Activated naive CD4-positive, alpha-beta T cell treated with anti-CD3 and anti-CD28 coated beads for 36 hours (primary cell): ENCODE measurements at regions of chr3 and their contacts with region 1.

Region 1: GRCh38 chr3:152268555-152269425 is at the start of gene MBNL1:
- DNase-seq: peak; percentile 91
- H3K4me3 Mint-ChIP-seq: peak within 1 kb of the TSS; percentile 81
- H3K27ac Mint-ChIP-seq: peak within 1 kb of the TSS; percentile 91
- H3K4me1 Mint-ChIP-seq: peaks cover 46% of the 10 kb centered on the region
- H3K27me3 Mint-ChIP-seq: no peaks in the 10 kb centered on the region
- total RNA-seq, gene MBNL1: 387 to 391 TPM

Region 2: DNA sequence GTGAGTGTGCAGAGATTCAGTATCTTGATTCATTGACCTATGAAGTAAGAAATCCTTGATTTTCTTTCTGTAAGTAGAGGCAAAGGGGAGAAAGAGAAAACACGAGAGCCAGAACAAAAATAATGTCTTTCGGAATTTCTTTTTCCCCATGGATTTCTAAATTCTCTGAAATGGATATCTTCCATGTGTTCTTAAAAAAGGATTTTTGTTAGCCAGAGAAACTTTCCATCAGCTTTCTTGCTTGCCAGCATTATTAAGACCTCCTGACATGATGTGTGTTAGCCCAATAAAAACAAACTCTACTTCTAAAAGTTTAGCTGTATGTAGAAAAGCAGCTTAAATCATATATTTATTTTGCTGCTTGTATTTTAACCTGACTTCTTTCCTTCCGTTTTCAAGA is 657.4 kb before region 1 on chr3:
- CTCF ChIA-PET with region 1: no interaction called
- intact Hi-C with region 1: no loop called
- DNase-seq: no peak
- H3K4me3 Mint-ChIP-seq: no peak overlapping the region
- H3K27ac Mint-ChIP-seq: no peak overlapping the region
- H3K4me1 Mint-ChIP-seq: no peaks in the 10 kb centered on the region
- H3K27me3 Mint-ChIP-seq: peaks cover 2% of the 10 kb centered on the region

Region 3: DNA sequence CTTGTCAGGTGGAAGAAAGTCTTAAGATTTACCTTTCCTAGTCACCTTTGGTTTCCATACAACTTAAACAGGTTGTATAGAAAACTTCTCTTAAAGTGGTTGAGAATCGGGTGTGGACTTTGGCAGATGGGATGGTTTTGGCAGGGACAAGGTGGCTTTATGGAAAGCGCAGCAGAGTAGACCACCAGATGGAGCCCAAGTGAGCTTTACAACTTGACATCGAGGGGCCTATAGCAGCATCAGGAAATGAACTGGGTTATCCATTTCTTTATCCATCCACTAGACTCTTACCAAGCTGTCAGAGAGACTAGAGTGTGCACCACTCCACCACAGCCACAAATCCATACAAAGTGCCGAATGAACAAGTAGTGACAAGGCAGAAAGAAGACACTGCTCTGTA is 85.3 kb before region 1 on chr3:
- CTCF ChIA-PET with region 1: interaction called, 6 read pairs
- intact Hi-C with region 1: loop called (anchors 1 kb)
- DNase-seq: peak; percentile 80
- H3K4me3 Mint-ChIP-seq: peak overlapping the region; percentile 46
- H3K27ac Mint-ChIP-seq: peak overlapping the region; percentile 28
- H3K4me1 Mint-ChIP-seq: peaks cover 81% of the 10 kb centered on the region
- H3K27me3 Mint-ChIP-seq: no peaks in the 10 kb centered on the region

Region 4: GRCh38 chr3:152199102-152199840 is 69.5 kb before region 1 on chr3:
- CTCF ChIA-PET with region 1: interaction called, 16 read pairs
- intact Hi-C with region 1: loop called (anchors 1 kb)
- DNase-seq: no peak
- H3K4me3 Mint-ChIP-seq: peak overlapping the region; percentile 75
- H3K27ac Mint-ChIP-seq: peak overlapping the region; percentile 99
- H3K4me1 Mint-ChIP-seq: peaks cover 69% of the 10 kb centered on the region
- H3K27me3 Mint-ChIP-seq: no peaks in the 10 kb centered on the region

Region 5: DNA sequence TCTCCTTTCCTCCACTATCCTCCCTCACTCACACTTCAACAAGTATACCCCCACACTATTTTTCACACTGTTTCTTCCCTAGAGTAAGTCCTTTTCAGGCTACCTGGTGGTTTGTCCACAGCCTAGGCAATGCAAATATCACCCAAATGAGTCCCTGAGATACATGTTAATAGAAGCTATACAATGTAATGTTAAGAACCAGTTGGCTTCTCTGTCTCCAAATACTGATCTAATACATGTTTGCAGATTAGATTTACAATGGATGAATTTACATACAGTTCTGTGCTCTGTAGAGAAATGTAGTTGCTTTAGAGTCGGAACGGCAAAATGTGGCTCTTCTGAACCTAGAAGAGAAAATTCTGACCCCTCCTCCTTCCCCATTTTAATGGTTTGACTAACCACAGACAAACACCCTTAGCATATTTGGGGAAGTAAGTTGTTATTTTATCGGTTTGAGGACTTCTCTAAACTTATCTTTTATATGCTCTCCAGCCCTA is 63.6 kb before region 1 on chr3:
- CTCF ChIA-PET with region 1: interaction called, 16 read pairs
- intact Hi-C with region 1: loop called (anchors 1 kb)
- DNase-seq: no peak
- H3K4me3 Mint-ChIP-seq: peak overlapping the region; percentile 89
- H3K27ac Mint-ChIP-seq: peak overlapping the region; percentile 99
- H3K4me1 Mint-ChIP-seq: peaks cover 67% of the 10 kb centered on the region
- H3K27me3 Mint-ChIP-seq: no peaks in the 10 kb centered on the region

Region 6: GRCh38 chr3:152243721-152244516 is 24.9 kb before region 1 on chr3:
- CTCF ChIA-PET with region 1: interaction called, 7 read pairs
- intact Hi-C with region 1: loop called (anchors 1 kb)
- DNase-seq: peak; percentile 39
- H3K4me3 Mint-ChIP-seq: peak overlapping the region; percentile 94
- H3K27ac Mint-ChIP-seq: peak overlapping the region; percentile 94
- H3K4me1 Mint-ChIP-seq: peaks cover 51% of the 10 kb centered on the region
- H3K27me3 Mint-ChIP-seq: no peaks in the 10 kb centered on the region

Region 7: DNA sequence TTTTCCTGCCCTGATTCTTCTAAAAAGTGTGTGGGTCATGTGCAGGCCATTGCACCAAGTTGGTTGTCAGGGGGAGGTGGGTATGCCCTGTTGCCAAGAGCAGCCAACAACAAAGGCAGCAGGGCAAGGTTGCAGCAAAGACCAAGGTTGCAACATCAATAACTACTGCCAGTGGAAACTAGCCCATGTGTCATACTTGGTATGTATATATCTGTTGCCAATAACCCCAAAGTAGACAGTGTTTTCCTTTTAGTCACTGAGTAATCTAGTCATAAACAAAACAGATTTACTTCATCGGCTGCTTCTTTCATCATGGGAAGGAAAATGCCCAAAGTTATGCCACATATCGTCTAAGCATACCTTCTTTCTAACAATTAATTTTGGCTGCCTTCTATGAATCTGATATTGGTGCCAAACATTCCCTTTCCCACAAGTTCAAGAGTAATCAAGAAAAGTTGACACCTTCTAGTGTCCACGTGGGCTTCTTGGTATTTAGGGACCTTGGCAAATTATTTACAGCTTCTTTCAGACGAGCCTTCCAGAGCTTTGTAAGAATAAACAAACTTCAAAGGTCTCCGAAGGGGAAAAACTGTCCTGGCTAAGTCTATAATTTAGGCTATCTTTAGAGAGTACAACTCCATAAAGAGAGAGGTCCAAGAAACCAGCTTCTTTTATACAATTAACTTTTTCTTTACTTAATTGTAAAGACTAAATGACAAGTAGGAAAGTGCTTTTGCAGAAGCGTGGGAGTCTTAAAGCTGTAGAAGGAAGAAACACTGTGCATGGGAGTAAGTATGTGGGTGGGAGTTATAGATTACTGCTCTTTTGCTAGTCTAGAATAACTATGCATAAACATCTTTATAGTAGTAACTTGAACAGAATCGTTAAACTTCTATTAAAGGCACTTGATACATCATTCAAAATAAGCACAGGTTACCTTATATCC is 10.1 kb before region 1 on chr3:
- CTCF ChIA-PET with region 1: interaction called, 3 read pairs
- intact Hi-C with region 1: loop called (anchors 1 kb)
- DNase-seq: peak; percentile 81
- H3K4me3 Mint-ChIP-seq: peak overlapping the region; percentile 72
- H3K27ac Mint-ChIP-seq: peak overlapping the region; percentile 94
- H3K4me1 Mint-ChIP-seq: peaks cover 84% of the 10 kb centered on the region
- H3K27me3 Mint-ChIP-seq: no peaks in the 10 kb centered on the region

Region 8: GRCh38 chr3:152302521-152303021 is 33.8 kb after region 1 on chr3:
- CTCF ChIA-PET with region 1: no interaction called
- intact Hi-C with region 1: loop called (anchors 1 kb)
- DNase-seq: no peak
- H3K4me3 Mint-ChIP-seq: no peak overlapping the region
- H3K27ac Mint-ChIP-seq: peak overlapping the region; percentile 52
- H3K4me1 Mint-ChIP-seq: peaks cover 88% of the 10 kb centered on the region
- H3K27me3 Mint-ChIP-seq: no peaks in the 10 kb centered on the region

Region 9: DNA sequence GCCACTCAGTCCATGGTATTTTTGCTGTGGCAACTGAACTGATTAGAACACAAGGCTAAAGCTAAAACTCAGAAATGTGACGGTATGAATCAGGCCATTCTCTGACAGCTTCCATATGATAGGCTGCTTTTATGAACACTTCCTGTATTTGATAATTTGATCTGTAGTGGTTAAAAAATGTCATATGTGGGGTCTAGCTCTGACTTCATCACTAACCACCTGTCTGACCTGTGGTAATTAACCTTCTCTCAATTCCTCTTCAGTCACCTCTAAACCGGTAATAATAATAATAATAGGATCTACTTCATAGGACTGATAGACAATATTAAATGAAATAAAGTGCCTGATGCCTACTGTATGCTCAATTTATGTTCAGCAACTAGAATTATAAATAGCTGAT is 223.1 kb after region 1 on chr3:
- CTCF ChIA-PET with region 1: no interaction called
- intact Hi-C with region 1: no loop called
- DNase-seq: no peak
- H3K4me3 Mint-ChIP-seq: no peak overlapping the region
- H3K27ac Mint-ChIP-seq: no peak overlapping the region
- H3K4me1 Mint-ChIP-seq: no peaks in the 10 kb centered on the region
- H3K27me3 Mint-ChIP-seq: no peaks in the 10 kb centered on the region

Region 10: GRCh38 chr3:152930514-152930913 is 661.7 kb after region 1 on chr3:
- CTCF ChIA-PET with region 1: no interaction called
- intact Hi-C with region 1: no loop called
- DNase-seq: no peak
- H3K4me3 Mint-ChIP-seq: no peak overlapping the region
- H3K27ac Mint-ChIP-seq: no peak overlapping the region
- H3K4me1 Mint-ChIP-seq: no peaks in the 10 kb centered on the region
- H3K27me3 Mint-ChIP-seq: peaks cover 3% of the 10 kb centered on the region